ENCODE measurements at regions of chr6 and their contacts with region 1.

Region 1: GRCh38 chr6:165098165-165098564 is 211.2 kb downstream of the C6orf118 start:
- DNase-seq: peak in 1 of 2 experiments; percentile 12
- H3K4me3 ChIP-seq: no peak overlapping the region
- H3K4me3 Mint-ChIP-seq: no peak overlapping the region
- H3K27ac Mint-ChIP-seq: no peak overlapping the region
- H3K4me1 ChIP-seq: peaks cover 17% of the 10 kb centered on the region
- H3K4me1 Mint-ChIP-seq: no peaks in the 10 kb centered on the region
- H3K27me3 ChIP-seq: no peaks in the 10 kb centered on the region
- H3K27me3 Mint-ChIP-seq: no peaks in the 10 kb centered on the region
- CTCF ChIP-seq: no peak

Region 2: GRCh38 chr6:165010556-165011535 is 87.3 kb before region 1 on chr6:
- CTCF ChIA-PET with region 1: no interaction called
- POLR2A ChIA-PET with region 1: no interaction called
- intact Hi-C with region 1: loop called (anchors 1 kb)
- DNase-seq: peak; percentile 71 to 77
- H3K4me3 ChIP-seq: no peak overlapping the region
- H3K4me3 Mint-ChIP-seq: peak overlapping the region; percentile 62
- H3K27ac Mint-ChIP-seq: peak overlapping the region; percentile 92
- H3K4me1 ChIP-seq: peaks cover 27% of the 10 kb centered on the region
- H3K4me1 Mint-ChIP-seq: peaks cover 28% of the 10 kb centered on the region
- H3K27me3 ChIP-seq: no peaks in the 10 kb centered on the region
- H3K27me3 Mint-ChIP-seq: no peaks in the 10 kb centered on the region
- CTCF ChIP-seq: no peak

Region 3: GRCh38 chr6:165042912-165043311 is 55.3 kb before region 1 on chr6:
- CTCF ChIA-PET with region 1: no interaction called
- POLR2A ChIA-PET with region 1: no interaction called
- intact Hi-C with region 1: no loop called
- DNase-seq: peak; percentile 43 to 49
- H3K4me3 ChIP-seq: no peak overlapping the region
- H3K4me3 Mint-ChIP-seq: no peak overlapping the region
- H3K27ac Mint-ChIP-seq: no peak overlapping the region
- H3K4me1 ChIP-seq: no peaks in the 10 kb centered on the region
- H3K4me1 Mint-ChIP-seq: no peaks in the 10 kb centered on the region
- H3K27me3 ChIP-seq: no peaks in the 10 kb centered on the region
- H3K27me3 Mint-ChIP-seq: no peaks in the 10 kb centered on the region
- CTCF ChIP-seq: no peak

Region 4: GRCh38 chr6:165146456-165146855 is 48.3 kb after region 1 on chr6:
- CTCF ChIA-PET with region 1: no interaction called
- POLR2A ChIA-PET with region 1: no interaction called
- intact Hi-C with region 1: loop called (anchors 2 kb)
- DNase-seq: no peak
- H3K4me3 ChIP-seq: no peak overlapping the region
- H3K4me3 Mint-ChIP-seq: no peak overlapping the region
- H3K27ac Mint-ChIP-seq: no peak overlapping the region
- H3K4me1 ChIP-seq: peaks cover 10% of the 10 kb centered on the region; the same call in 1 of the 2 replicates
- H3K4me1 Mint-ChIP-seq: peaks cover 10% of the 10 kb centered on the region
- H3K27me3 ChIP-seq: no peaks in the 10 kb centered on the region
- H3K27me3 Mint-ChIP-seq: no peaks in the 10 kb centered on the region
- CTCF ChIP-seq: no peak

Region 5: GRCh38 chr6:165755583-165755982 is 657.4 kb after region 1 on chr6:
- CTCF ChIA-PET with region 1: no interaction called
- POLR2A ChIA-PET with region 1: no interaction called
- intact Hi-C with region 1: no loop called
- DNase-seq: no peak
- H3K4me3 ChIP-seq: no peak overlapping the region
- H3K4me3 Mint-ChIP-seq: no peak overlapping the region
- H3K27ac Mint-ChIP-seq: no peak overlapping the region
- H3K4me1 ChIP-seq: no peaks in the 10 kb centered on the region
- H3K4me1 Mint-ChIP-seq: no peaks in the 10 kb centered on the region
- H3K27me3 ChIP-seq: no peaks in the 10 kb centered on the region
- H3K27me3 Mint-ChIP-seq: peaks cover 4% of the 10 kb centered on the region
- CTCF ChIP-seq: no peak

Measured in Caco-2 (cell line).